Activated naive CD4-positive, alpha-beta T cell treated with anti-CD3 and anti-CD28 coated beads for 36 hours (primary cell): ENCODE measurements at regions of chr5 and their contacts with region 1.

Region 1: GRCh38 chr5:131322926-131323325 is 59.1 kb downstream of the CDC42SE2 start:
- DNase-seq: no peak
- H3K4me3 Mint-ChIP-seq: no peak overlapping the region
- H3K27ac Mint-ChIP-seq: peak overlapping the region; percentile 75
- H3K4me1 Mint-ChIP-seq: peaks cover 70% of the 10 kb centered on the region
- H3K27me3 Mint-ChIP-seq: no peaks in the 10 kb centered on the region

Region 2: DNA sequence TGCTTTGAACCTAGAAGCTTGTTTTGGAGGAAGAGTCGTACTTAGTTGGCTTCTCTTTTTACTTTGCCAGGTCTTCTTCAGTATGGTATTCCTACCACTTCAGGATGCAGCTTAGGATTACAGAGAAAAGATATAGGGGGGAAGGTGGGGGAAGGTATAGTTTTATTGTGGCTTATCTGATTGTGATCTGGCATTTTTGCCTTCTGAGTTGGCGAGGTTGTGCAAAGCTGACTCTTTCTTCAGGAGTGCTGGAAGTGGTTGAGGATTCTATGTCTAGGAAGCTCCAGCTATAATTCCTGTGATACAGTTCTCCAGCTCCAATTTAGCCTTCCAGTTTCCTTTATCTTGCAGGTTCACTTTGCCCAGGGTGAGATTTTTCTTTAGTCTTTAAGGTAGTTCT is 52.1 kb before region 1 on chr5:
- CTCF ChIA-PET with region 1: no interaction called
- intact Hi-C with region 1: loop called (anchors 2 kb)
- DNase-seq: no peak
- H3K4me3 Mint-ChIP-seq: peak overlapping the region; percentile 50
- H3K27ac Mint-ChIP-seq: peak overlapping the region; percentile 97
- H3K4me1 Mint-ChIP-seq: peaks cover 75% of the 10 kb centered on the region
- H3K27me3 Mint-ChIP-seq: no peaks in the 10 kb centered on the region

Region 3: DNA sequence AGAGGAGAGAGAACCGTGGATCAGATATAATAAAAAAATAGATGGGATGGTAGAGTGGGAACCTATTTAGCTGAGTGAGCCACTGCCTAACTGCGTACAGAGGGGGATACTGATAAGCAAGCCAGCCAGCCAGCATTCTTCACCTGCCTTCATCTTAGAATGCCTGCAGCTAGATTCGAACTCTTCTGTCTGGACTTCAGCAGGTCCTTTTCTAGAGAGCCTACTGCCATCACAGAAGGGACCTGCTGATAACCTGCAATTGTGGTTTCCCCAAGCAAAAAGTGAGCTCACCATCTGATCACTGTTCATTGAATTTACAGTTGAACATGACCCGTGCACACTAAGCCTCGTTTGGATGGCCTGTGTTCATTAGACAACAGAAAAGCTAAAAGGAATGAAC is 50.3 kb after region 1 on chr5:
- CTCF ChIA-PET with region 1: no interaction called
- intact Hi-C with region 1: no loop called
- DNase-seq: no peak
- H3K4me3 Mint-ChIP-seq: peak overlapping the region; percentile 14
- H3K27ac Mint-ChIP-seq: peak overlapping the region; percentile 85
- H3K4me1 Mint-ChIP-seq: peaks cover 91% of the 10 kb centered on the region
- H3K27me3 Mint-ChIP-seq: no peaks in the 10 kb centered on the region